GM12878 (cell line): ENCODE measurements at regions of chr18 and their contacts with region 1.

Region 1: DNA sequence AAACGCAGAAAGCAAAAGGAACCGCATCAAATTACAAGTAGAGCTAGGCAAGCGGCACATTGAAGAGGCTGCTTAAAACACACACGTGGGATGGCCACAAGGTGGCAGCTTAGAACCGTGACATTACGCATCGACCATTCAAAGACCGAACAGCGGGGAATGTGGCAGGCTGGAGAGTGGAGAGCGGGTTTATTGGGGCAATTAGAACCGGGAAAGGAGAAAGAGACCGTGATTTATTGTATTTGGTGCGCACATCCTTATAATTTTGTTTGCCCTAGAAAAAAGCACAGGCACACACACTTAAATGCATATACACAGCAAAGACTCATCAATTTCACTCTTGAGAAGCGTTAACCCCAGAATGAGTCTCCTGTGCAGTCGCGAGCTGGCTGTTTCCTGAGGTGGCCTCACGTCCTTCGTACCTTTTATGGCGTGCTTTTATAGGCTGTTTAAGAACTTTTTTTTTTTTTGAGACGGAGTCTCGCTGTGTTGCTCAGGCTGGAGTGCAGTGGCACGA is 31.7 kb upstream of the MEP1B start:
- DNase-seq: peak; percentile 20
- ATAC-seq: peak; percentile 98
- H3K4me3 ChIP-seq: no peak overlapping the region
- H3K27ac ChIP-seq: no peak overlapping the region
- H3K4me1 ChIP-seq: no peaks in the 10 kb centered on the region; the same call in 1 of the 2 replicates
- H3K27me3 ChIP-seq: no peaks in the 10 kb centered on the region
- CTCF ChIP-seq: peak; percentile 83 to 91 (median 85)
- EP300 ChIP-seq: no peak
- POLR2A ChIP-seq: no peak
- RAD21 ChIP-seq: peak; percentile 89

Region 2: GRCh38 chr18:32271672-32272208 is 113.6 kb after region 1 on chr18:
- CTCF ChIA-PET with region 1: no interaction called
- POLR2A ChIA-PET with region 1: no interaction called
- RAD21 ChIA-PET with region 1: no interaction called
- SMC1A ChIA-PET with region 1: interaction called, 3 read pairs
- in situ Hi-C with region 1: no loop called
- intact Hi-C with region 1: loop called (anchors 5 kb)
- DNase-seq: no peak
- ATAC-seq: peak; percentile 82
- H3K4me3 ChIP-seq: no peak overlapping the region
- H3K27ac ChIP-seq: no peak overlapping the region
- H3K4me1 ChIP-seq: no peaks in the 10 kb centered on the region
- H3K27me3 ChIP-seq: peaks cover 0 to 6% of the 10 kb centered on the region in 2 experiments; a peak in 2 of 4 replicates
- CTCF ChIP-seq: peak; percentile 53 to 63 (median 58); a peak in 5 of 6 replicates
- EP300 ChIP-seq: no peak
- POLR2A ChIP-seq: no peak
- RAD21 ChIP-seq: peak; percentile 68